ENCODE measurements at regions of chr6 and their contacts with region 1.

Region 1: DNA sequence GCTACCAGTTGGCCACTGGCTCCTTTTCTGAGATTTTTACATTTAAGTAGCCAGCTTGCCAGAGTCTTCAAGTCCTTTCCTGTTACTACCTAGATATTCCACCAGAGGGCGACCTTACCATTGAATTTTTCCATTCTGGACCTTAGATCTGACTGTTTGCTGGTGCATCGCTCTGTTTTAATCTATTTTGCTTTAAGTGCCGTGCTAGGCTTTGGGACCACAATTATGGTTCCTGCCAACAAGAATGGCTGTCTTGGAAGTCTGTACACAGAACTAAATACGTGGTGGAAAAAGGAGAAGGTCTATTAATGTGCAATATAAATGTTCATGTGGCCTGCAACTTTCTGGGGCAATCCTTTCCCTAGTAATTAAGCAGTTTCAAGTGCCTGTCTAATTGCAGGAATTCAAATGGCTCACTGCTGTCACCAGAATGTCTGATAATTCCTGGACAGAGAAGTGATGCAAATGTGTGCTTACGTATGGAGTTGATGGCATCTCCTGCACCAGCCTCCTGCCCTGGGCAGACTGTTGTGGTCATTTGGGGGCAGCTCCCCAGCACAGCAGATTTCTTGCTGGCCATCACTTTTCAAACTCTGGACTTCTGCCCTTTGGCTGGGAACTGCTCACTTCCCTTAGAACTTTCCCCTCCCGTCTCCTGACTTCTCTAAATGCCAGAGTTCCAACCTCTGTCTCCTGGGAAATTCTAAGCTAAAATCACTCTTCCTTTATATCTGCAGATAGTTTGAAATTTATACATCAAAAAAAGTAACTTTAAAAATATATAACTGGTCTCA is 5.6 kb upstream of the HLA-DOA start:
- DNase-seq: peak; percentile 71
- H3K4me3 ChIP-seq: no peak overlapping the region; a peak in 1 of 4 replicates
- H3K27ac ChIP-seq: no peak overlapping the region
- H3K4me1 ChIP-seq: no peaks in the 10 kb centered on the region; a peak in 1 of 4 replicates
- H3K27me3 ChIP-seq: peaks cover 72% of the 10 kb centered on the region
- CTCF ChIP-seq: peak; percentile 75
- EP300 ChIP-seq: no peak
- RAD21 ChIP-seq: peak; percentile 78

Region 2: GRCh38 chr6:33000055-33000454 is 15.0 kb before region 1 on chr6:
- CTCF ChIA-PET with region 1: interaction called, 10 read pairs
- POLR2A ChIA-PET with region 1: no interaction called
- DNase-seq: no peak
- H3K4me3 ChIP-seq: no peak overlapping the region
- H3K27ac ChIP-seq: no peak overlapping the region
- H3K4me1 ChIP-seq: peaks cover 0 to 16% of the 10 kb centered on the region in 2 experiments; a peak in 1 of 4 replicates
- H3K27me3 ChIP-seq: peaks cover 35% of the 10 kb centered on the region
- CTCF ChIP-seq: no peak
- EP300 ChIP-seq: no peak
- RAD21 ChIP-seq: peak; percentile 32; the same call in 1 of the 2 replicates

Region 3: GRCh38 chr6:33288921-33289748 is 274.1 kb after region 1 on chr6 and contains the starts of genes PFDN6 and WDR46:
- CTCF ChIA-PET with region 1: no interaction called
- POLR2A ChIA-PET with region 1: no interaction called
- DNase-seq: peak; percentile 88
- H3K4me3 ChIP-seq: peak within 1 kb of the TSS; percentile 78 to 96
- H3K27ac ChIP-seq: peak within 1 kb of the TSS; percentile 40 to 91; a peak in 3 of 4 replicates
- H3K4me1 ChIP-seq: peaks cover 5 to 23% of the 10 kb centered on the region in 2 experiments; a peak in 3 of 4 replicates
- H3K27me3 ChIP-seq: no peaks in the 10 kb centered on the region
- CTCF ChIP-seq: no peak
- EP300 ChIP-seq: no peak
- RAD21 ChIP-seq: no peak
- polyA plus RNA-seq, gene PFDN6: 182 and 213 TPM in 2 replicates
- polyA plus RNA-seq, gene WDR46: 153 and 172 TPM in 2 replicates

Region 4: GRCh38 chr6:34044945-34045595 is 1030.0 kb after region 1 on chr6:
- CTCF ChIA-PET with region 1: no interaction called
- POLR2A ChIA-PET with region 1: no interaction called
- DNase-seq: no peak
- H3K4me3 ChIP-seq: no peak overlapping the region
- H3K27ac ChIP-seq: peak overlapping the region in 1 of 2 experiments; percentile 31; a peak in 1 of 4 replicates
- H3K4me1 ChIP-seq: peaks cover 0 to 20% of the 10 kb centered on the region in 2 experiments; a peak in 1 of 4 replicates
- H3K27me3 ChIP-seq: peaks cover 14% of the 10 kb centered on the region; the same call in 1 of the 2 replicates
- CTCF ChIP-seq: no peak
- EP300 ChIP-seq: no peak
- RAD21 ChIP-seq: no peak

Measured in SK-N-SH (cell line).